ENCODE measurements at regions of chr2 and their contacts with region 1.

Region 1: DNA sequence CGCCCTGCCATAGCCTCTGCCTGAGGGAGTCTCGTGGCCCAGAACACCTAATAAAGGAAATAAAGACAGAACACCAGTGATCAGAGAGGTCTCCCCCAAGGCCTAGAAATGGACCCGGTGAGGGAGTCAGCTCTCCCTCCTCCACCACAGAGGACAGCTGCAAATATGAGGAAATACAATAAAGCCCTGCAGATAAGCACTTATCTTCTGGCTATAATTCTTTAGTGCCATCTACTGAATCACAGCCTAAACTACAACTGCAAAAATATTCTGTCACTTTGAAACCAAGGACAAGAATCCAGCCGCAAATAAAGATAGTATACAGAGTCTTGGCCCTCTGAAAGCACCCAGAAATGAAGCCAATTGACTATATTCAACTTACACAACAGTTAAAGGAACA is 42.4 kb upstream of the TACR1 start:
- DNase-seq: peak; percentile 43
- ATAC-seq: no peak
- H3K4me3 ChIP-seq: no peak overlapping the region
- H3K27ac ChIP-seq: no peak overlapping the region
- H3K4me1 ChIP-seq: peaks cover 12% of the 10 kb centered on the region
- H3K27me3 ChIP-seq: no peaks in the 10 kb centered on the region
- CTCF ChIP-seq: peak; percentile 45
- POLR2A ChIP-seq: no peak
- RAD21 ChIP-seq: peak; percentile 57

Region 2: DNA sequence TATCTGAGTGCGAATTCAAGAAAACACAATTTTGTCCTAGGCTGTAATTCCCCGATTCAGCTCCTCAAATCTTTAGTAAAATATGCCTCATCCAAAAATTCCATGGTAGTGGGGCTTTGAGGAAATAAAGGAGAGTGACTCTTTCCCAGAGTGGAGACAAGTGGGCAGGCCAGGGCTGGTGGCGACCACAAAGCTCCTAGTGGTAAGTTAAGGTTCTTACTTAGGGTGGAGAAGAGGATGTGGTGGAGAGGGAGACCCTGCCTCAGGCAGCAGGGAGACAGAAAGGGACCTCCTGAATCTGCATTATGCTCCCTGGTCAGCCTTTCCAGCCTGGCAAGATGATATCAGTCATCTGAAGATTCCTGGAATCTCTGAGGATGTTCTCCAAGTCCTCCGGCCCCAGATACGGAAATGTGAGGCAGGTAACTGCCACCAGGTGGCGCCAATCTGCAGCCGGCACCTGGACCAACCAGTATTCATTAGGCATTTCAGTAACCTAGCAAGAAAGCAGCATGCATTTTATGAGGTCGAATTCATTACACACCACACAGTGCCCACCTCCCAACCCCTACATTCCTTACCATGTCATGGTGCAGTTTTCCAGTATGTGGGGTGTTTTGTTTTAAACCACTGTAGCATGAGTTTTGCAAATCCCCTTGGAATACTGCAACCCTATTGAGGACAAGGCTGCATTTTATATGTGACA is 176.9 kb before region 1 on chr2:
- CTCF ChIA-PET with region 1: interaction called, 3 read pairs
- POLR2A ChIA-PET with region 1: no interaction called
- dilution Hi-C with region 1: no loop called
- in situ Hi-C with region 1: no loop called
- intact Hi-C with region 1: loop called (anchors 5 kb)
- DNase-seq: peak; percentile 58
- ATAC-seq: peak; percentile 74
- H3K4me3 ChIP-seq: no peak overlapping the region; the same call in 1 of the 2 replicates
- H3K27ac ChIP-seq: no peak overlapping the region; the same call in 1 of the 2 replicates
- H3K4me1 ChIP-seq: peaks cover 4% of the 10 kb centered on the region; the same call in 1 of the 2 replicates
- H3K27me3 ChIP-seq: no peaks in the 10 kb centered on the region
- CTCF ChIP-seq: peak; percentile 82
- POLR2A ChIP-seq: no peak
- RAD21 ChIP-seq: peak; percentile 66

Region 3: DNA sequence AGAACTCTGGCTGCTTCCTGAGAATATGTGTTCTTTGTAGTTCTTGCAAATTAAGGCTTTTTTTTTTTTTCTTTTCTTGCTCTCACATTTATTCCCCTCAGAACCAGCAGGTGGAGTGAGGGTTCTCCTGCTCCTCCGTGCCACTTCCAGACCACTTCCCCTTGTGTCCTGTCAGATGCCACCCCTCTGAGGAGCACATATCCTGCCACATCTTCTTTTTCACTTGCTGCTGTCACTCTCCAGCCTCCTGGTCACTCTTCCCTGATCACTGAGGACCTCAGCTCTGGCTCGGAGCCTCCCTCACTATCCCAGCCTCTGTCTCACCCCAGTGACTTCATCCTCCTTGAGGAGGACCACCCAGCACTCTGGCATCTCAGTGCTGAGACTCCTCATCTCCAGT is 142.8 kb before region 1 on chr2:
- CTCF ChIA-PET with region 1: no interaction called
- POLR2A ChIA-PET with region 1: no interaction called
- dilution Hi-C with region 1: no loop called
- in situ Hi-C with region 1: no loop called
- intact Hi-C with region 1: no loop called
- DNase-seq: peak; percentile 31
- ATAC-seq: no peak
- H3K4me3 ChIP-seq: no peak overlapping the region
- H3K27ac ChIP-seq: no peak overlapping the region
- H3K4me1 ChIP-seq: peaks cover 5% of the 10 kb centered on the region
- H3K27me3 ChIP-seq: peaks cover 2% of the 10 kb centered on the region; the same call in 1 of the 2 replicates
- CTCF ChIP-seq: peak; percentile 48
- POLR2A ChIP-seq: no peak
- RAD21 ChIP-seq: peak; percentile 41; the same call in 1 of the 2 replicates

Region 4: GRCh38 chr2:75390169-75390568 is 148.5 kb after region 1 on chr2:
- CTCF ChIA-PET with region 1: no interaction called
- POLR2A ChIA-PET with region 1: no interaction called
- dilution Hi-C with region 1: no loop called
- in situ Hi-C with region 1: no loop called
- intact Hi-C with region 1: no loop called
- DNase-seq: no peak
- ATAC-seq: no peak
- H3K4me3 ChIP-seq: no peak overlapping the region
- H3K27ac ChIP-seq: no peak overlapping the region
- H3K4me1 ChIP-seq: no peaks in the 10 kb centered on the region
- H3K27me3 ChIP-seq: peaks cover 3% of the 10 kb centered on the region
- CTCF ChIP-seq: no peak
- POLR2A ChIP-seq: no peak
- RAD21 ChIP-seq: no peak